CD14-positive monocyte (primary cell): ENCODE measurements at regions of chr3 and their contacts with region 1.

Region 1: DNA sequence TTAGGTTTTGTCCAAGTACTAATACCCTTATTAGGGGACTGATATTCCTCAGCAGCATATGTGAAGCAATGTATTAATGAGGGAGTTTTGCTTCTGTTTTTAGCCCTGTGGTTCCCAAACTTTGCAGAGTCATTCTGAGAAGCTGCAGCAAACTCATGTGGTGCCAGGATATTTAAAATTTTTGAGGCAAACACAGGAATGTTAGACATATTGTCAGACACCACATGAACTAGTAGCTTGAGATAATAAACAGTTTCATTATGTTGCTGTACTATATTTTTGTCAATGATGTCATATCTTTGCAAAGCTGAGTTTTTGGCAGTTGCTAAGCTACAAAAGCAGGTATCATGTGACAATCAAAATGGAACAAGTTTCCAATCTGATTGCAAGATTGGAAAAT is 36.6 kb downstream of the ATP6V1A start:
- DNase-seq: peak; percentile 42 to 71 (median 58)
- H3K4me3 ChIP-seq: peak overlapping the region; percentile 7 to 60 (median 19)
- H3K4me3 Mint-ChIP-seq: no peak overlapping the region
- H3K27ac ChIP-seq: peak overlapping the region in 1 of 2 donors; percentile 87
- H3K27ac Mint-ChIP-seq: peak overlapping the region in 6 of 7 donors; percentile 50 to 96 (median 89)
- H3K4me1 ChIP-seq: peaks cover 18 to 25% of the 10 kb centered on the region in 2 donors
- H3K4me1 Mint-ChIP-seq: peaks cover 16% of the 10 kb centered on the region
- H3K27me3 ChIP-seq: no peaks in the 10 kb centered on the region
- H3K27me3 Mint-ChIP-seq: no peaks in the 10 kb centered on the region
- CTCF ChIP-seq: no peak

Region 2: DNA sequence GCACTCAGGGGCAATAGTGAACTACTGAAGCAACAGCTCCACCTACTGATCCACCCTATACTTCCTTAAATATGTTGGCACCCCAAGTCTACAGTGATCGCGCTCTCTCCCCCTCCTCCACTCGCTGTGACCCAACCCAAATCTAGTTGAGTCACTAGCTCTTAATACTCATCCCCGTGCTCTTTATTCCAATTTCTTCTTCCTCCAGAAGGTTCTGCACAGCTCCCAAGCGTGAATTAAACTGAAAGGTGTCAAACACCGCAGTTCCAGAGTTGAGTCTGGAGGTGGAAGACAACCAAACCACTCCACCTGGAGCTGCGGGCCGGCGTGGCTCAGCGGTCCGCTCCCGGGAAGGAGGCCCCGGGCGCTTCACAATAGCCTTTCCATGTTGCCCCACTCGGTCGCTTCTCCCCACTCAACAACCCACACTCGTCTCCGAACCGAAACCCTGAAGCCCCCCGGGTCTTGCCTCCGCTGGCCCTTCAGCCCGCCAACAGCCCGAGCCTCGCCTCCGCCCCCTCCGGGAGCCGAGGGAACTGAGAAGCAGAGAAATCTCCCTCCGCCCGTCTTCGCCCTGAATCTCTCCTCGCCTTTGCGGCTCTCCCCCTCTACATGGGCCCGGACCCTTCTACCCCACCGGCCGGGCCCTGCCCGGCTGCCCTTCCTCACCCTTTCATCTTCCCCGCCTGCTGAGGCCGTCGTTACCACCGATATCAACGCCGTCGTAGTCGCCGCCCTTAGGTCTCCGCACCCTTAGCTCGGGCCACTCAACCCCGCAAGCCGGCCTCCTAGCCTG is 38.0 kb before region 1 on chr3:
- intact Hi-C with region 1: loop called (anchors 5 kb)
- DNase-seq: peak; percentile 95 to 98 (median 96)
- H3K4me3 ChIP-seq: peak overlapping the region; percentile 68 to 99 (median 73)
- H3K4me3 Mint-ChIP-seq: peak overlapping the region; percentile 96 to 100
- H3K27ac ChIP-seq: peak overlapping the region; percentile 94 to 98
- H3K27ac Mint-ChIP-seq: peak overlapping the region; percentile 99 to 100 (median 100)
- H3K4me1 ChIP-seq: peaks cover 39 to 63% of the 10 kb centered on the region in 2 donors
- H3K4me1 Mint-ChIP-seq: peaks cover 69% of the 10 kb centered on the region
- H3K27me3 ChIP-seq: no peaks in the 10 kb centered on the region
- H3K27me3 Mint-ChIP-seq: peaks cover 0 to 3% (median 0%) of the 10 kb centered on the region in 3 donors
- CTCF ChIP-seq: peak; percentile 66